Right ventricle myocardium inferior (tissue), 1 donor: ENCODE measurements at regions of chr10 and their contacts with region 1.

Region 1: DNA sequence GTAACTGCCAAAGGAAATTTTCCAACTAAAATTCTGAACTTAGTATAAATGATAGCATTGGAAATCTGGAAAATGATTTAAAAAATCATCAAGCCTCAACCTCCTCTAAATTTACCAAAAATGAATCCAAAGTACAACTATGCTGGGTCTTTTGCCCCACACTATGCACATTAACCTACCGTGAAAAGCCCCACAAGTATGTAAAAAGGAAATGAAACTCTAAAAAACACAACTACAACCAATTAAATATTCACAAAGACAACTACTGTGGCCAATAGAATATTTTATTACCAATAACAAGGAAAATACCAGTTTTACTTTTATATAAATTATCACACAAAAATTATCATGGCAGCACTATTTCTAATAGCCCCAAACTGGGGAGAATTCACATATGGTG is 19.3 kb downstream of the EIF3A start:
- DNase-seq: no peak
- ATAC-seq: no peak

Region 2: DNA sequence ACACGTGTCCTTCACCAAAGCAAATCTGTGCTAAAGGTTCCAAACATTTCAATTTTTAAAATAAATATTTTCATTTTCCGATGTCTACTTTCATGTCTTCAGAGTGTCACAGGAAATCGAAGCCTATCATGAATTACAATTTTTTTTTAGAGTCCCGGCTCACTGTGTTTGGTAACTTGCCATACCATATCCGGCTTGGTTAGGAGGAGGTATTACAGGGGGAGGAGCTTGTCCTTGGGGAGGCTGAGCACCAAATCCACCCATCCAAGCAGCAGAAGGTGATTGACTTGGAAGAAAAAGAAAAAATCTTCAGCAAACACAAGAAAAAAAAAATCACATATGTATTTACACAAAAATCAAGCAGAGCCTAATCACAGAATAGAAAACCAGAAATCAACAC is 514.2 kb after region 1 on chr10:
- intact Hi-C with region 1: loop called (anchors 10 kb)
- DNase-seq: no peak
- ATAC-seq: no peak